HAP-1 (cell line): ENCODE measurements at regions of chr7 and their contacts with region 1.

Region 1: DNA sequence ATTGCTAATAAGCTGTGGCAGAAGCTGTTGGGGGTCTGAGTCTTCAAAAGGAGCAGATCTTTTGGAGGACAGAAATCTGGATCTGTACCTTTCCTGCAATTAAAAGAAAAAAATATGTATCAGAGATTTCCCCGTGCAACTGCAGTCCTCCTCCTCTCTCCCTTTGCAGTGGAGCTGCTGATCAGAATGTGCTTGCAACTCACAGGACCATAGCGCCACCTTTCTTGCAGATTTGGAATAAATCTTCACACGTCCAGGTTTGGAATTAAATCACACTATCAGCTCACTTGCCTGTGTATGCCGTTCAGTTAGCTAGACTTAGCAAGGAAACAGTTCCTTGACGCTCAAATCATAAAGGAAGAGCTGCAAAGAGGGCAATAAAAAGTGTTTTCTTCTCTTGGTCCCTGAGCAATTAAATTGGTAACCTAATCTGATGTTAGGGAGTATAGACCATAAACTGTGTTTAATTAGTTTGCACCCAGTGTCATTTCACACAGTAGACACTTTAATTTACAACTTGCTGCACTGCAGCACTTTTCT is 77.4 kb downstream of the PON1 start:
- DNase-seq: peak; percentile 72
- H3K4me3 ChIP-seq: no peak overlapping the region
- H3K4me1 ChIP-seq: peaks cover 8% of the 10 kb centered on the region
- H3K27me3 ChIP-seq: no peaks in the 10 kb centered on the region

Region 2: GRCh38 chr7:94436018-94436604 is 810.8 kb before region 1 on chr7:
- in situ Hi-C with region 1: loop called (anchors 25 kb)
- DNase-seq: peak; percentile 49 to 83
- H3K4me3 ChIP-seq: no peak overlapping the region
- H3K4me1 ChIP-seq: peaks cover 11% of the 10 kb centered on the region
- H3K27me3 ChIP-seq: no peaks in the 10 kb centered on the region

Region 3: DNA sequence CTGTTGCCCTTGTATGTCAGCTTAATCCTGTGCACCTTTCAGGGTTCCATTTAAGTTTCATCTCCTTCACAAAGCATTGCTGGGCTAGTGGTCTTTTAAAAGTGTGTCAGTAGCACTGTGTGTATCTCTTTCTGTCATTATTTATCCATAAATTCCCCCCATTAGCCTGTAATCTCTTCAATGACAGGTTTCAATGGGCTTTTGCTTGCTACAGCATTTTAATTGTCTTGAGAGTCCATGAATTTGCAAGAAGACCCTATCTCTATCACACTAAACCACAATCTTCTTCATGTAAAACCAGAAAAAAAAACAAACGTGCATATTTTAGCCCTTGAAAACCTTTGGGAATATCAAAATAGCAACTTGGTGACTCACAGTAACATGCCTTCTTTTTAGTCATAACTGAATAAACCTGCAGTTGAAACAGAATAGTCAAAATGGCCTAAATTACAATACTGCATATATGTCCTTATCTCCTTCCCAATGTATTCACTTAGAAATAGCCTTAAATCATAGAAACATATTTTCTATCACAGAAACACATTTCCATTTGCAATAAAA is 41.2 kb before region 1 on chr7:
- in situ Hi-C with region 1: no loop called
- DNase-seq: peak in 1 of 2 experiments; percentile 15
- H3K4me3 ChIP-seq: no peak overlapping the region
- H3K4me1 ChIP-seq: peaks cover 5% of the 10 kb centered on the region
- H3K27me3 ChIP-seq: no peaks in the 10 kb centered on the region